Ascending aorta (tissue), 2 donors: ENCODE measurements at regions of chr1 and their contacts with region 1.

Region 1: GRCh38 chr1:59296358-59297256 is at the start of gene FGGY:
- DNase-seq: peak; percentile 96 to 99
- H3K4me3 ChIP-seq: peak within 1 kb of the TSS; percentile 69 to 70
- H3K27ac ChIP-seq: peak within 1 kb of the TSS; percentile 96 to 99
- H3K4me1 ChIP-seq: peaks cover 11 to 13% of the 10 kb centered on the region in 2 donors
- H3K27me3 ChIP-seq: no peaks in the 10 kb centered on the region
- CTCF ChIP-seq: no peak
- total RNA-seq, gene FGGY: 7.0 TPM

Region 2: DNA sequence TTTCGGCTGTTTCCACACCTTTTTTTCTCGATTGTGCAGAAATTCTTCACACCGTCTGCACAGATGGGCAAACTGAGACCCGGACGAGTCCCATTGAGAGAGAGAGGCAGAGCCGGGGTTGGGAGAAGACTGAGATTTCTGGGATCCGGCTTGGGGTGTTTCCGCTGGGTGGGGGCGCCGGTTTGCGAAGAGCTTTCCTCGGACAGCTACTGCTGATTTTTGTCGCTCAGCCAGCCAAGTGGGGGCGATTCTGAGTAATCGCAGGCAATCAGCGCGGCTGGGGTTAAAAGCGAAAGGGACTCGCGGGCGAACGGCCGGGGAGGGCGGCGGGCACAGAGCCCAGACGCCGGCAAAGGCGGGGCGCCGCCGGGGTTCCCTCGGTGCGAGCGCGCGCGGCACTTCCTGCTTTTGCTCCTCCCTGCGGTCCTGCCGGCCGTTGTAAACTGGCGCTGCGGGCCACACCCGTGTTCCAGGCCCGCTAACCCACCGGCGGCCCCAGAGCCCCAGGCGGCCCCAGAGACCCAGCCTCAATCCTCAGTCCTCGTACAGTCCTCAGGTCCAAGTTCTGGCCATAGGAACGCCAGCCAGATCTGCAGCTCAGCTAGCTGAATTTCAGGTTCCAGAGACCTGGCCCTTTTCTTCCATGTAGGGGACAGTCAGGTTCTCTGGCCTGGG is 480.4 kb before region 1 on chr1:
- intact Hi-C with region 1: loop called (anchors 1 kb)
- DNase-seq: peak; percentile 47 to 94
- H3K4me3 ChIP-seq: peak overlapping the region; percentile 64 to 83
- H3K27ac ChIP-seq: peak overlapping the region; percentile 86 to 97
- H3K4me1 ChIP-seq: peaks cover 5 to 25% of the 10 kb centered on the region in 2 donors
- H3K27me3 ChIP-seq: no peaks in the 10 kb centered on the region
- CTCF ChIP-seq: no peak

Region 3: GRCh38 chr1:59393211-59394180 is 96.9 kb after region 1 on chr1:
- intact Hi-C with region 1: loop called (anchors 1 kb)
- DNase-seq: peak; percentile 58 to 94
- H3K4me3 ChIP-seq: no peak overlapping the region
- H3K27ac ChIP-seq: peak overlapping the region; percentile 91 to 93
- H3K4me1 ChIP-seq: peaks cover 7 to 30% of the 10 kb centered on the region in 2 donors
- H3K27me3 ChIP-seq: no peaks in the 10 kb centered on the region
- CTCF ChIP-seq: no peak

Region 4: GRCh38 chr1:59446257-59446901 is 149.8 kb after region 1 on chr1:
- intact Hi-C with region 1: loop called (anchors 1 kb)
- DNase-seq: no peak
- H3K4me3 ChIP-seq: no peak overlapping the region
- H3K27ac ChIP-seq: peak overlapping the region; percentile 68 to 76
- H3K4me1 ChIP-seq: peaks cover 11 to 30% of the 10 kb centered on the region in 2 donors
- H3K27me3 ChIP-seq: no peaks in the 10 kb centered on the region
- CTCF ChIP-seq: no peak

Region 5: DNA sequence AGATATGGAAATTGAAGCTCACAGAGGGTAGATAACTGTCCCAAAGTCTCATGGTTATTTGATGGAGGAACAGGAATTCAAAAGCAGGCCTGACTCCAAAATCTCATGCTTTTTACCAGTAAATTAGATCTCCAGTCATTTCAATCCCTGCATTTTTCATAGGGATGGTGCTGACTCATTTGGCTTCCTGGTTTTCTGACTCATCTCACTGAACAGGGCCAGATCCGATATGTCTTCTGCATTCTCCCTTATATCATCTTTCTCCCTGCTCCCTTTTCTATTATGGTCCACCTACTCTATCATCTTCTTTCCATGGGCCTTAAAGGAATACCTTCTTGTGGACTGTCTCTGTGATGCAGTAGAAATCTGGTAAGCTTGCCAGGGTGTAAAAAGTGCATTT is 187.5 kb after region 1 on chr1:
- intact Hi-C with region 1: no loop called
- DNase-seq: no peak
- H3K4me3 ChIP-seq: no peak overlapping the region
- H3K27ac ChIP-seq: no peak overlapping the region
- H3K4me1 ChIP-seq: no peaks in the 10 kb centered on the region
- H3K27me3 ChIP-seq: no peaks in the 10 kb centered on the region
- CTCF ChIP-seq: no peak

Region 6: DNA sequence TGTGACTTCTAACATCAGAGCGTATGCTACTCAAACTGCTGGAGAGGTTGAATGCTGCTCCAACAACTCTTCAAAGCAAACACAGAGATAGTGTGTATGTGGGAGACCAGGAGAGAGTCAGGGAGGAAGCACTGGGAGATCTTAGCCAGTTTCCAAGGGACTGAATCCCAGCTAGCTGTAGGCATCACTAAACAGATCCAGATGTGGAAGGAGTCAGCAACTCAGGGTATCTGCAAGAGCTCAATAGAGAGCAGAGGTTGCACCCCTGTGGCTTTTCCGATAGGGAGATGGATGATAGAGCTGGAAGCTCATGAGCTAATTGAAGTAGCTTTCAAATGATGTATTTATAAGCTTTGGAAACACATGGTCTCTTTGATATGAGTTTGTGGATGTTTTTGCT is 349.3 kb after region 1 on chr1:
- intact Hi-C with region 1: no loop called
- DNase-seq: no peak
- H3K4me3 ChIP-seq: no peak overlapping the region
- H3K27ac ChIP-seq: no peak overlapping the region
- H3K4me1 ChIP-seq: no peaks in the 10 kb centered on the region
- H3K27me3 ChIP-seq: no peaks in the 10 kb centered on the region
- CTCF ChIP-seq: no peak